MCF 10A (cell line): ENCODE measurements at regions of chr3 and their contacts with region 1.

Region 1: GRCh38 chr3:46909535-46910442 is 32.3 kb downstream of the PTH1R start:
- DNase-seq: peak; percentile 81
- H3K4me3 Mint-ChIP-seq: no peak overlapping the region
- H3K27ac Mint-ChIP-seq: no peak overlapping the region
- H3K4me1 Mint-ChIP-seq: peaks cover 13% of the 10 kb centered on the region
- H3K27me3 Mint-ChIP-seq: no peaks in the 10 kb centered on the region
- CTCF ChIP-seq: peak; percentile 87

Region 2: DNA sequence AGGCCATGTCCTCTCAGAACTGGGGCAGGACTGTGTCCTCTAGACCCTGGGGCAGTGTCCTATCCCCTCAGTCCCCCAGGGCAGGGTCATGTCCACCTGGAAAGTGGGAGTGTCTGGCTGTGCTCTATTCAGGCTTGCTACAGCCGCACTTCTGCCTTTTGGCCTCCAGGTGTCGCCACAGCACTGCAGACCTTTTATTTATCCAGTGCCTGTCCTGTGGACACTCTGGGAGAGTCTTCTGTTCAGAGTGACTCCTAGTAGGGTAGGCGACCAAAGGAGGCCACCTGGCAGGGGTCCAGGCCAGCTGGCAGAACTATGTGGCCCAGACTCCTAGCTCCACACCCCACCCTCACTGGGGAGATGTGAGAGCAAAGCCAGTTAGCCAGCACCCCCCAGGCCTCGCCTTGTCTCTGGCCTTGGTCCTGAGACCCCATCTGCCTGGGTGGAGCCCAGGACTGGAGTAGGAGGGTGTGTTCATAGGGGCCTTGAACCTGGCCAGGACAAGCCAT is 204.7 kb before region 1 on chr3:
- CTCF ChIA-PET with region 1: interaction called, 19 read pairs
- POLR2A ChIA-PET with region 1: interaction called, 3 read pairs
- intact Hi-C with region 1: loop called (anchors 1 kb)
- DNase-seq: peak; percentile 75
- H3K4me3 Mint-ChIP-seq: no peak overlapping the region
- H3K27ac Mint-ChIP-seq: no peak overlapping the region
- H3K4me1 Mint-ChIP-seq: peaks cover 6% of the 10 kb centered on the region
- H3K27me3 Mint-ChIP-seq: no peaks in the 10 kb centered on the region
- CTCF ChIP-seq: peak; percentile 97

Region 3: GRCh38 chr3:46895204-46895660 is 14.6 kb before region 1 on chr3:
- CTCF ChIA-PET with region 1: interaction called, 19 read pairs
- POLR2A ChIA-PET with region 1: no interaction called
- intact Hi-C with region 1: no loop called
- DNase-seq: peak; percentile 59
- H3K4me3 Mint-ChIP-seq: no peak overlapping the region
- H3K27ac Mint-ChIP-seq: no peak overlapping the region
- H3K4me1 Mint-ChIP-seq: no peaks in the 10 kb centered on the region
- H3K27me3 Mint-ChIP-seq: peaks cover 15% of the 10 kb centered on the region
- CTCF ChIP-seq: peak; percentile 89

Region 4: GRCh38 chr3:46976326-46977190 is 66.8 kb after region 1 on chr3 and contains the start of gene CCDC12:
- CTCF ChIA-PET with region 1: interaction called, 3 read pairs
- POLR2A ChIA-PET with region 1: interaction called, 19 read pairs
- intact Hi-C with region 1: loop called (anchors 2 kb)
- DNase-seq: peak; percentile 100
- H3K4me3 Mint-ChIP-seq: peak within 1 kb of the TSS; percentile 97
- H3K27ac Mint-ChIP-seq: peak within 1 kb of the TSS; percentile 100
- H3K4me1 Mint-ChIP-seq: peaks cover 30% of the 10 kb centered on the region
- H3K27me3 Mint-ChIP-seq: no peaks in the 10 kb centered on the region
- CTCF ChIP-seq: no peak
- total RNA-seq, gene CCDC12: 43.9 and 45.9 TPM in 2 replicates

Region 5: GRCh38 chr3:47145272-47145671 is 235.5 kb after region 1 on chr3:
- CTCF ChIA-PET with region 1: no interaction called
- POLR2A ChIA-PET with region 1: no interaction called
- intact Hi-C with region 1: no loop called
- DNase-seq: no peak
- H3K4me3 Mint-ChIP-seq: no peak overlapping the region
- H3K27ac Mint-ChIP-seq: no peak overlapping the region
- H3K4me1 Mint-ChIP-seq: peaks cover 5% of the 10 kb centered on the region
- H3K27me3 Mint-ChIP-seq: no peaks in the 10 kb centered on the region
- CTCF ChIP-seq: no peak

Region 6: GRCh38 chr3:47164007-47164881 is 254.5 kb after region 1 on chr3 and contains the start of gene SETD2:
- CTCF ChIA-PET with region 1: no interaction called
- POLR2A ChIA-PET with region 1: no interaction called
- intact Hi-C with region 1: loop called (anchors 5 kb)
- DNase-seq: peak; percentile 95
- H3K4me3 Mint-ChIP-seq: peak within 1 kb of the TSS; percentile 81
- H3K27ac Mint-ChIP-seq: peak within 1 kb of the TSS; percentile 87
- H3K4me1 Mint-ChIP-seq: peaks cover 27% of the 10 kb centered on the region
- H3K27me3 Mint-ChIP-seq: no peaks in the 10 kb centered on the region
- CTCF ChIP-seq: no peak
- total RNA-seq, gene SETD2: 35.8 and 38.0 TPM in 2 replicates